CD8-positive, alpha-beta T cell (primary cell): ENCODE measurements at regions of chr22 and their contacts with region 1.

Region 1: GRCh38 chr22:36856121-36856791 is 4.5 kb upstream of the NCF4 start:
- DNase-seq: peak; percentile 86 to 99 (median 94)
- ATAC-seq: peak; percentile 78
- H3K4me3 ChIP-seq: no peak overlapping the region
- H3K4me3 Mint-ChIP-seq: peak overlapping the region; percentile 13
- H3K27ac ChIP-seq: no peak overlapping the region
- H3K27ac Mint-ChIP-seq: no peak overlapping the region
- H3K4me1 ChIP-seq: peaks cover 16% of the 10 kb centered on the region
- H3K4me1 Mint-ChIP-seq: peaks cover 13% of the 10 kb centered on the region
- H3K27me3 ChIP-seq: no peaks in the 10 kb centered on the region
- H3K27me3 Mint-ChIP-seq: no peaks in the 10 kb centered on the region
- CTCF ChIP-seq: peak; percentile 100

Region 2: DNA sequence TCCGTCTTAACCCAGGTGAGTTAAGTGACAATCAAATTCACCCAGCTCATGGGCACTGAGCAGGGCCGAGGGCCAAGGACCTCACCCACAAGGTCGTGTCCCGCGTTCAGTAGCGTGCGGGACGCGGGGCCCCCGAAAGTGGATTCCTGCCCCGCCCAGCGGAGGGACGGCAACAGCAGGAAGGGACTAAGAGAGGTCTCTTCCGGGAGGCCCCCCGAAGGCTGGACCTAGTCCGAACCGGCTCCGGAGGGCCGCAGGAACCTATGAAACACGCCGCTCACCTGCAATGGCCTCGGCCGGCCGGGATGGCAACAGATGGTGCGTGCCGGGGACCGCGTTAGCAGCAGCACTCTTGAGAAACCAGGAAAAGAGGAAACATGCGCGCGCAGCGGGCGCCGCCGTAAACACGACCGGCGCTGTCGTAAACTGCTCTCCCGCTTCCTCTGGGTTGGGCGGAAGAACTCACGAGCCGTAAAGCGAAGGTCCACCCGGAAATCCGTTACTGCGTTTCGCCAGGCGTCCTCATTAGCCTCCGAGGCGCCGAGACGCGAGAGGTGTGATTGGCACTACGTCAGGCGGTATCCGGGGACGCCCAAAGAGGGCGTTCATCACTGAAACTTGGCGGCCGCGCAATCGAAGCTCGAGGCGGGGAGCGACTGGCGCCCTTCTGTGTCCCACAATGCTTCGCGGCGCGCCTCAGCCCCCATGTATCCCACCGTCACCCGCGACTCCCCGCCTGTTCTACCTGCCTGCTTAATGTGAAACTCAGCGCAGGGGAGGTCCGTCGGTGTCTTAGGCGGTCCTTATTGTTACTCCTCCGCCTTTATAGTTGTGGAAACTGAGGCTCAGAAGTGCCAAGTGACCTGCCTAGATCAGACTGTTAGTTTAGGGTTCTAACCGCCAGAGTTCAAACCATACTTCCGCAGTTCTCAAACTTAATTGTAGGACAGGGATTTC is 327.2 kb before region 1 on chr22 and contains the start of gene EIF3D:
- CTCF ChIA-PET with region 1: no interaction called
- POLR2A ChIA-PET with region 1: no interaction called
- intact Hi-C with region 1: loop called in 1 of 2 experiments (anchors 10 kb)
- DNase-seq: peak; percentile 95 to 100 (median 98)
- ATAC-seq: peak; percentile 92
- H3K4me3 ChIP-seq: peak within 1 kb of the TSS; percentile 67 to 90
- H3K4me3 Mint-ChIP-seq: peak within 1 kb of the TSS; percentile 90
- H3K27ac ChIP-seq: peak within 1 kb of the TSS; percentile 91 to 93
- H3K27ac Mint-ChIP-seq: peak within 1 kb of the TSS; percentile 99
- H3K4me1 ChIP-seq: peaks cover 12% of the 10 kb centered on the region
- H3K4me1 Mint-ChIP-seq: peaks cover 24% of the 10 kb centered on the region
- H3K27me3 ChIP-seq: no peaks in the 10 kb centered on the region
- H3K27me3 Mint-ChIP-seq: no peaks in the 10 kb centered on the region
- CTCF ChIP-seq: no peak
- total RNA-seq, gene EIF3D: 302 to 315 TPM

Region 3: GRCh38 chr22:36757668-36758211 is 98.5 kb before region 1 on chr22:
- CTCF ChIA-PET with region 1: interaction called, 13 read pairs
- POLR2A ChIA-PET with region 1: no interaction called
- intact Hi-C with region 1: loop called in 1 of 2 experiments (anchors 1 kb)
- DNase-seq: peak; percentile 49 to 82 (median 73)
- ATAC-seq: peak; percentile 67
- H3K4me3 ChIP-seq: no peak overlapping the region
- H3K4me3 Mint-ChIP-seq: no peak overlapping the region
- H3K27ac ChIP-seq: no peak overlapping the region
- H3K27ac Mint-ChIP-seq: no peak overlapping the region
- H3K4me1 ChIP-seq: peaks cover 4% of the 10 kb centered on the region
- H3K4me1 Mint-ChIP-seq: no peaks in the 10 kb centered on the region
- H3K27me3 ChIP-seq: no peaks in the 10 kb centered on the region
- H3K27me3 Mint-ChIP-seq: peaks cover 13% of the 10 kb centered on the region
- CTCF ChIP-seq: peak; percentile 78

Region 4: DNA sequence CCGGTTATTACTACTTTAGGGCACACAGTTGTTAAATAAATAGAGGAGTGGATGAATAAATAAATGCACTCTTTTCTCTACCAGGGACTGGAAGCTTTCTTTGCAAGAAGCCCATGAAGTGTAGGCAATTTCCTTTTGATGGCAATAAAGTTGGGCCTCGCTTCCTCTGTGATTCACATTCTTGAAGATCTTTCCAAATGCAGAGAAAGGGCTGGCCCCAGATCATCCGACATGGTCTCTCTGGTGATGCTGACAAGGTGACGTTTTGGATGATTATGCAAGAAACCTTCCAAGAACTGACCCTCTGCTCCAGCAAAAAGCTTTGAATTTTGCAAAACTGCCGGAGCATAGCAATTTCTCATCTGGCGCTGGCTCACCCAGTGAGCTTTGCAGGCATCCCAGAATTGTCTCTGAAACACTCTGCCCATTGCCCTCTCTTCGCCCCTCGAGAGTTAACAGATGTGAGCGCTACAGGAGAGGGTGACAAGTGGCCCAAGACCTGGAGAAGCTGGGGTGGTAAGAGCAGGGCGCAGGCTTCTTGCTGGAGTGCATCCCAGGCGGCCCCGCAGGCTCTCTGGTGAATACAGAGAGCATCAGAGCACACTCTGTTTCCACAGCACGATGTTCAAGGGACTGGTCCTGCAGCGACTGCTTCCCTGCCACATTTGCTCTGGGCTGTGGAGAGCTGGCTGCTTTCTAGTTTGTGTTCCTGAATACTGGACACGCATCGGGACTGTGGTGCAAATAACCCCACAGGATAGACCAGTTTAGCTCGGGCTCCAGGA is 68.9 kb before region 1 on chr22:
- CTCF ChIA-PET with region 1: interaction called, 62 read pairs
- POLR2A ChIA-PET with region 1: no interaction called
- intact Hi-C with region 1: loop called (anchors 1 kb)
- DNase-seq: no peak
- ATAC-seq: no peak
- H3K4me3 ChIP-seq: no peak overlapping the region
- H3K4me3 Mint-ChIP-seq: no peak overlapping the region
- H3K27ac ChIP-seq: no peak overlapping the region
- H3K27ac Mint-ChIP-seq: no peak overlapping the region
- H3K4me1 ChIP-seq: peaks cover under 1% of the 10 kb centered on the region
- H3K4me1 Mint-ChIP-seq: no peaks in the 10 kb centered on the region
- H3K27me3 ChIP-seq: peaks cover 0 to 2% of the 10 kb centered on the region in 2 experiments
- H3K27me3 Mint-ChIP-seq: peaks cover 2% of the 10 kb centered on the region
- CTCF ChIP-seq: no peak

Region 5: DNA sequence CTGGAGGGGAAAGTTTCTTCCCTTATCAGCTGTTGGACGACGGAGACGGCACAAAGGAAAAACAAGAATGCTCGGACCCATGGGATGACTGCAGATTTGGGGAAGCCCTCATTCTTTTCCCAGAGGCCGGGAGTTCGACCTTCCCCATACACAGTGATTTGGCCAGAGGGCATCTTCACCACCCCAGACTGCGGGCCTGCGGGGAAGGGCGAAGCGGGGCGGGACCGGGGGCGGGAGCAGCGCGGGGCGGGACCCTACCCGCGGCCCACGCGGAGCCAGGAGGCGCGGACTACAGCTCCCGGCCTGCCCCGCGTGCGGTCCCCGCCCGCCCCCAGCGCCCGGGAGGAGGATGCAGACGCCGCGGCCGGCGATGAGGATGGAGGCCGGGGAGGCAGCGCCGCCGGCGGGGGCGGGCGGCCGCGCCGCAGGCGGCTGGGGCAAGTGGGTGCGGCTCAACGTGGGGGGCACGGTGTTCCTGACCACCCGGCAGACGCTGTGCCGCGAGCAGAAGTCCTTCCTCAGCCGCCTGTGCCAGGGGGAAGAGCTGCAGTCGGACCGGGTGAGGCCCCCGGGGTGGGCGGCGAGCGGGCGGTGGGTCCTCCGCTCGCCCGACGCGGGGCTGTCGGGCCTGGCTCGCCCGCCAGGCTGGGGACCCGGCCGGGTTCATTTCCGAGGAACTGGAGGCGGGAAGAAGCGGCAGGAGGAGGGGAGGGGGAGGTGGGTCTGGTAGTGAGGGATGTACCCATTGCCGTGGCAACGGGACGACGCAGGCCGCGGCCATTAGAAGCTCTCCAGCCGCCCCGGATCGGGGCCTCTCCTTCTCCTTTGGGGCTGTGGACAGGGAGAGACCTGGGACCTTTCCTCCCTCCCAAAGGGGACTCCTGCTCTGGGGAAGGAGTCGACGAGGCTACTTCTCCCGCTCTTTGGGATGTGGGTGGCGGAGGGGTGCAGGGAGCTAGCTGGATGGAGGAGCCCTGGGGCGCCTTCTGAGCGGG is 195.4 kb after region 1 on chr22 and contains the start of gene KCTD17:
- CTCF ChIA-PET with region 1: no interaction called
- POLR2A ChIA-PET with region 1: no interaction called
- intact Hi-C with region 1: loop called in 1 of 2 experiments (anchors 5 kb)
- DNase-seq: peak; percentile 40 to 84 (median 72)
- ATAC-seq: peak; percentile 100
- H3K4me3 ChIP-seq: peak within 1 kb of the TSS; percentile 46 to 65
- H3K4me3 Mint-ChIP-seq: peak within 1 kb of the TSS; percentile 84
- H3K27ac ChIP-seq: peak within 1 kb of the TSS in 1 of 2 experiments; percentile 37
- H3K27ac Mint-ChIP-seq: no peak within 1 kb of the TSS
- H3K4me1 ChIP-seq: peaks cover 11% of the 10 kb centered on the region
- H3K4me1 Mint-ChIP-seq: peaks cover 10% of the 10 kb centered on the region
- H3K27me3 ChIP-seq: no peaks in the 10 kb centered on the region
- H3K27me3 Mint-ChIP-seq: no peaks in the 10 kb centered on the region
- CTCF ChIP-seq: no peak
- total RNA-seq, gene KCTD17: 18.6 to 22.8 TPM